AG04450 (cell line): ENCODE measurements at regions of chr1 and their contacts with region 1.

Region 1: GRCh38 chr1:201792534-201793305 is 36.2 kb upstream of the IPO9 start:
- DNase-seq: peak; percentile 65
- H3K4me3 ChIP-seq: no peak overlapping the region
- H3K27ac ChIP-seq: no peak overlapping the region
- H3K27me3 ChIP-seq: no peaks in the 10 kb centered on the region
- CTCF ChIP-seq: peak; percentile 99

Region 2: DNA sequence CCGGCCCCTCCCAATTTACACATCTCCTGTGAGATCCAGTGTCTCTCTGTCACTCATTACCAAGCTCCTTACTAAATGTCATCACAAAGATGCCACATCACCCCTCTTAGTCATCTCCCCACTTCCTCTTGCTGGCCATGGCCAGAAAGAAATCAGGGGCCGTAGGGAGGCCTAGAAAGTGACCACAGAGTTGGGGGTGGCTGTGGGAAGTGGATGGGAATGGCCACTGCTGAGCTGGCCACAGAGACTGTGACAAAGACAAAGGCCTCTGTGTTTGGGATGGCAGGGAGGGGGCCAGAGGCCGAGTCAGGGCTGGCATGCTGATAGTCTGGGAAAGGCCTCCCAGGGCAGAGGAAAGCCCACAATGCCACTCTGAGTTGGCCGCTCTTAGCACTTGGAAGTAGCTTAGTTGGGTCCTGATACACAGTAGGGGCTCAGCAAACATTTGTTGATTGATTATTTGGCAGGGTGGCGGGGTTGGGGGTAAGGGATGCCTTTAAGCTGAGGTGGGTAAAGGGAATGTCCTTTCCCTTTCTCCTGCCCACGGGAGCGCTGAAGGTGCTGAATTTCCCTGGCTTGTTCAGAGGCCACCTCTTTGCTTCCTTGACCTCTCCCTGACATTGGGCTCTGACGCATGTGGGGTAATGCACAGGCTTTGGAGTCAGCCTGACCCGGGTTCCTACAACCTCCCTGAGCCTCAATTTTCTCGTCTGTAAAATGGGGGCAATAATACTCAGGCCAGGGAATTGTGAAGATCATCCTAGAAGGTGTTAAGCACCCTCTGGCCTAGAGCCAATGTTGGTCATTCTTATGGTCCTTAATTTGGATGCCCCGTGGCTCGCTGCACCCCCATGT is 240.6 kb before region 1 on chr1:
- CTCF ChIA-PET with region 1: interaction called, 11 read pairs
- POLR2A ChIA-PET with region 1: no interaction called
- DNase-seq: no peak
- H3K4me3 ChIP-seq: no peak overlapping the region
- H3K27ac ChIP-seq: peak overlapping the region; percentile 84
- H3K27me3 ChIP-seq: no peaks in the 10 kb centered on the region
- CTCF ChIP-seq: no peak

Region 3: GRCh38 chr1:201703621-201704439 is 88.9 kb before region 1 on chr1:
- CTCF ChIA-PET with region 1: interaction called, 232 read pairs
- POLR2A ChIA-PET with region 1: interaction called, 5 read pairs
- DNase-seq: no peak
- H3K4me3 ChIP-seq: no peak overlapping the region
- H3K27ac ChIP-seq: peak overlapping the region; percentile 52
- H3K27me3 ChIP-seq: no peaks in the 10 kb centered on the region
- CTCF ChIP-seq: peak; percentile 93

Region 4: DNA sequence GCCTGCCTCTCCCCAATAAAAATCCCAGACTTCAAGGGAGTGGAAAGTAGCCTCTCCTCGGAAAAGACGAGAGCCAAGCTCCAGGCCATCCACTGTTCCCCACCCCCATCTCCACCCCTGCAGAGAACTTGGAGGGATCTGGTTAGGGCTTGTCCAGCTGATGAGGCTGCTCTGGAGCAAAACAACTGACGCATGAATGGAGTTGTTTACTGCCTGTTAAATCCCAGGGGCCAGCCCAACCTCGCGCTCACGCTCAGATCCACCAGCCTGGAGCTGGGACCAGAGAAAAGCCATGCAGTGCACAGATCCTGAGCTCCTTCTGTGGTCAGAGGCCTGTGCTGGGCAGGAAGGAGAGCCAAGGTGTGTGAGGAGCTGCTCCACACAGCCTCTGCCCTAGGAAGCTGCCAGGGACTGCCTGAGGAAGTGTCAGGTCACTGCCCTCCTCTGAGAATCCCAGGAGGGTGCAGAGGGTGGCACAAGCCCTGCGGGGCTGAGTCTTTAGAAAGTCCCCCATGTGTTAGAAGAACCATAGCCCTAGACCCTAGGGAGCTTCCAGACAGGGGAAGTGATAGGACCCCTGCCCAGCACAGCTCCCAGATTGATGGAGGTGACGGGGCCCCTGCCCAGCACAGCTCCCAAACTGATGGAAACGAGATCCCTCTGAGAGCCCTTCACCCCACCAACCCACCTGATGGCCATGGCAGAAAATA is 72.8 kb before region 1 on chr1:
- CTCF ChIA-PET with region 1: interaction called, 232 read pairs
- POLR2A ChIA-PET with region 1: interaction called, 3 read pairs
- DNase-seq: peak; percentile 54
- H3K4me3 ChIP-seq: no peak overlapping the region
- H3K27ac ChIP-seq: peak overlapping the region; percentile 65
- H3K27me3 ChIP-seq: no peaks in the 10 kb centered on the region
- CTCF ChIP-seq: no peak

Region 5: DNA sequence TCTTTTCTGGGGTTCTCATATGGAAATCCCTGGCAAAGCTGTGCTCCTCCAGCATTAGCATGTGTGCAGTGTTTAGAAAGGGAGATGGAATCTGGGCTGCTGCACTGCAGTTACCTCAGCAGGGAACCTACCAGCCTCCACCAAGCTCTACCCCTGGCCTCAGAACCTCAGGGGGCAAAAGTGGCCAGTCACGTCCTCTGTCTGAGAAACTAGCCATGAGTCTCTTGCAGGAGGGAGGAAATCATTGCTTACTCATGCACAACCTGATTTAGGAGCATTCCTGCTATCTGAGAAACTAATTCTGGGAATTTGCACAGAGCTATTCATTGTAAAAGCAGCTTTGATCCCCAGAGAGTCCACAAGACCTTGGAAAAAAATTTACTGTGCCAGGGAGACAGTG is 44.4 kb before region 1 on chr1:
- CTCF ChIA-PET with region 1: interaction called, 16 read pairs
- POLR2A ChIA-PET with region 1: no interaction called
- DNase-seq: peak; percentile 74
- H3K4me3 ChIP-seq: no peak overlapping the region
- H3K27ac ChIP-seq: peak overlapping the region; percentile 85
- H3K27me3 ChIP-seq: no peaks in the 10 kb centered on the region
- CTCF ChIP-seq: no peak

Region 6: GRCh38 chr1:201778279-201779065 is 14.2 kb before region 1 on chr1:
- CTCF ChIA-PET with region 1: interaction called, 15 read pairs
- POLR2A ChIA-PET with region 1: no interaction called
- DNase-seq: no peak
- H3K4me3 ChIP-seq: no peak overlapping the region
- H3K27ac ChIP-seq: no peak overlapping the region
- H3K27me3 ChIP-seq: no peaks in the 10 kb centered on the region
- CTCF ChIP-seq: no peak

Region 7: GRCh38 chr1:201813226-201813625 is 20.5 kb after region 1 on chr1:
- CTCF ChIA-PET with region 1: interaction called, 18 read pairs
- POLR2A ChIA-PET with region 1: no interaction called
- DNase-seq: no peak
- H3K4me3 ChIP-seq: no peak overlapping the region
- H3K27ac ChIP-seq: peak overlapping the region; percentile 13
- H3K27me3 ChIP-seq: no peaks in the 10 kb centered on the region
- CTCF ChIP-seq: no peak